ENCODE measurements at regions of chr9 and their contacts with region 1.

Region 1: GRCh38 chr9:71268871-71269635 is 147.6 kb upstream of the TRPM3 start:
- DNase-seq: no peak
- H3K4me3 ChIP-seq: no peak overlapping the region
- H3K27ac ChIP-seq: no peak overlapping the region
- H3K4me1 ChIP-seq: no peaks in the 10 kb centered on the region
- H3K27me3 ChIP-seq: no peaks in the 10 kb centered on the region
- CTCF ChIP-seq: no peak
- EP300 ChIP-seq: no peak
- POLR2A ChIP-seq: no peak

Region 2: GRCh38 chr9:70924895-70925547 is 344.0 kb before region 1 on chr9:
- intact Hi-C with region 1: loop called (anchors 10 kb)
- DNase-seq: no peak
- H3K4me3 ChIP-seq: no peak overlapping the region
- H3K27ac ChIP-seq: no peak overlapping the region
- H3K4me1 ChIP-seq: peaks cover 0 to 8% (median 0%) of the 10 kb centered on the region in 4 donors
- H3K27me3 ChIP-seq: no peaks in the 10 kb centered on the region
- CTCF ChIP-seq: peak in 3 of 4 experiments; percentile 57 to 69 (median 68)
- EP300 ChIP-seq: no peak
- POLR2A ChIP-seq: no peak

Measured in sigmoid colon (tissue), 7 donors.